Activated CD4-positive, alpha-beta T cell treated with anti-CD3 and anti-CD28 coated beads, Interleukin-2, amount 10 ng/mL, durations not matched to agents 24 days and 14 days (primary cell): ENCODE measurements at regions of chr20 and their contacts with region 1.

Region 1: DNA sequence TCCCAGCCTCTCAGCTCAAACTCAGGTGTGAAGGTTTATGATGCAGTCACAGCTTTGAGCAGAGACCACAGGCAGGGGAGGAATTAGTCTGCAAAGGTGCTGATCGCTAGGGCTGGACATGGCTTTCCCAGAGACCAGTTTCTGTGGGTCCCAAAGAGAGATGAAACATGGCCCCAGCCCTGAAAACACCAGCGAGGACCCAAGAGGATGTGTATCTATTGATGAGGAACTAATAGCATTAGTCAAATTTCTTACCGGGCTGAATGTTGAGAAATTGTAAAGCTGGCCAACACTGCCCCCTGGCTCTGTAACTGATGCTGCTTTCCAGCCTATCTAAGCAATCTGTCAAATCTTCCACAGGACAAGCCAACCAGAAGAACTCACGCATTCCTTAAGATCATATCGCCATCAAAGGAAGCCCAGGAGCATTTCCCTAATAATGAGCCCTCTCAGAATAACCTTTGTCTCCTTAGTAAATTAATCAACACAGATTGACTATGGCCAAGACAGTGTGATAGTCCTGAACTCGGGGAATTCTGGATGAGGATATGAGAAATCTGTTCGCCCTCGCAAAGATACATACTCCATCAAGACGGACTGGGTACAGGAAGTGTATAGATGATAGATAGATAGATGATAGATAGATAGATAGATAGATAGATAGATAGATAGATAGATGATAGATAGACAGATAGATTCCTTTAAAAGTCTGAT is 7.8 kb upstream of the ACSS1 start:
- DNase-seq: peak; percentile 89
- H3K4me3 Mint-ChIP-seq: no peak overlapping the region
- H3K27ac Mint-ChIP-seq: no peak overlapping the region
- H3K4me1 Mint-ChIP-seq: peaks cover 3% of the 10 kb centered on the region
- H3K27me3 Mint-ChIP-seq: peaks cover 50% of the 10 kb centered on the region

Region 2: DNA sequence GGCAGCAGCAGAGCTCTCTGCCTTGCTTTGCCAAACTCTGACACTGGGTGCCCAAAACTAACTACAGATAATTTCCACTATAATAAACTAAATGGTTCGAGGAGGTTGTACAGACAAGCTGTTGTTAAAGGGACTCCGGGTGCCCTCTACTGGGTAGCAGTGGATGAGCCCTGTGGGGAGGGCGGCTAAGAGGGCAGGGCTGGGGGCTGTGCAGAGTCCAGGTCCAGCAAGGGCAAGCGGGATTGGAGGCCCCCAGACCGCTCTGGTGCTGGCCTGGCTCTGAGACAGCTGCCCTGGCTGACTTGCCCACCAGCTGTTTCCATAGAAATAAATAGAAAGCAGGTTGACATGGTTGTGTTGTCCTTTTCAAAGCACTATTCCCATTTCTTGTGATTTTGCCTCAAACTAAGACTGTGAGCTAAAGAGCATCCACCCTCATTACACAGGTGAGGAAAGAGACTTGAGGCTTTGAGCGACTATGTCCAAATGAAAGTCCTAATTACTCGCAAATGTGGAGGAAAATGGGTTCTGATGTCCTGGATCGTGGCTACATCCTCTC is 284.3 kb before region 1 on chr20:
- intact Hi-C with region 1: loop called (anchors 10 kb)
- DNase-seq: peak; percentile 69
- H3K4me3 Mint-ChIP-seq: no peak overlapping the region
- H3K27ac Mint-ChIP-seq: no peak overlapping the region
- H3K4me1 Mint-ChIP-seq: peaks cover 10% of the 10 kb centered on the region
- H3K27me3 Mint-ChIP-seq: peaks cover 15% of the 10 kb centered on the region